ENCODE measurements at regions of chr12 and their contacts with region 1.

Region 1: DNA sequence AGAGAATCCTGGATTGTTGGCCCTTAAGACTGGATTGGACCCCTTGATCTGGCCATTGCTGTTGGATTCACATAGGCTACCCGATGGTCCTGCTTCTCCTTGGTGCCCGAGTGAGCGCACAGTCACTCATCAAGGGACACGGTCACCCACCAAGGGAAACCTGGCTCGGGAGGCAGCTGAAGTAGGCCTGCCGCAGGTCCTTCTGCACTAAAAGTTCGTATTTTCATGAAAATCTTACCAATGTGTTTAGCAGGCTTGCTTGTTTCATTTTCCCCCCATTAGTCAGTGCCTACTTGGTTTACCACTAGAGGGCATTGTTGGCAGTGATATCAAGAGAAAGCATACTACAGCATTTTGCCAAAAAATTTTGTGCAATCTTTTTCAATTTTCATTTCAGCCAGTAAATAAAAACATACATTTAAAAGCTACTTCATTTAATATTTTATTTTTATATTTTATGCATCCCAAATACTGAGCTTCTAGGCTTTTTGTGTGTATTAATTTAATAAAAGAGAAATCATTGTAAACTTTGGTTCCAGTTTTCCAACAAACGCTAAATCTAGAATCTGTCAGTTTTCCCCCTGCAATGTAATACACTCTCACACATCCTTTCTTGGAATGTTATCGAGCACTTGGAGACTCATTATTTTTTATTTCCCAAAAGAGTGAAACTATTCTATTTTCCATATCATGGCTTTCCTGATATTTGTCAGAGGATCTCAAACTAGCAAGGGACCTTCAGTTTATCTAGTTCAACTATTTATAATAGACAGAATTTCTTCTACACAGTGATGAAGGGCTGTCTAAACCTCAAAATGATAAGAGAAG is 116.7 kb downstream of the LMNTD1 start:
- DNase-seq: peak; percentile 85
- H3K4me3 Mint-ChIP-seq: peak overlapping the region; percentile 77
- H3K27ac Mint-ChIP-seq: no peak overlapping the region
- H3K4me1 Mint-ChIP-seq: peaks cover 10% of the 10 kb centered on the region
- H3K27me3 Mint-ChIP-seq: peaks cover 2% of the 10 kb centered on the region

Region 2: GRCh38 chr12:25585021-25585523 is 148.7 kb after region 1 on chr12:
- intact Hi-C with region 1: no loop called
- DNase-seq: no peak
- H3K4me3 Mint-ChIP-seq: no peak overlapping the region
- H3K27ac Mint-ChIP-seq: no peak overlapping the region
- H3K4me1 Mint-ChIP-seq: peaks cover 11% of the 10 kb centered on the region
- H3K27me3 Mint-ChIP-seq: no peaks in the 10 kb centered on the region

Region 3: DNA sequence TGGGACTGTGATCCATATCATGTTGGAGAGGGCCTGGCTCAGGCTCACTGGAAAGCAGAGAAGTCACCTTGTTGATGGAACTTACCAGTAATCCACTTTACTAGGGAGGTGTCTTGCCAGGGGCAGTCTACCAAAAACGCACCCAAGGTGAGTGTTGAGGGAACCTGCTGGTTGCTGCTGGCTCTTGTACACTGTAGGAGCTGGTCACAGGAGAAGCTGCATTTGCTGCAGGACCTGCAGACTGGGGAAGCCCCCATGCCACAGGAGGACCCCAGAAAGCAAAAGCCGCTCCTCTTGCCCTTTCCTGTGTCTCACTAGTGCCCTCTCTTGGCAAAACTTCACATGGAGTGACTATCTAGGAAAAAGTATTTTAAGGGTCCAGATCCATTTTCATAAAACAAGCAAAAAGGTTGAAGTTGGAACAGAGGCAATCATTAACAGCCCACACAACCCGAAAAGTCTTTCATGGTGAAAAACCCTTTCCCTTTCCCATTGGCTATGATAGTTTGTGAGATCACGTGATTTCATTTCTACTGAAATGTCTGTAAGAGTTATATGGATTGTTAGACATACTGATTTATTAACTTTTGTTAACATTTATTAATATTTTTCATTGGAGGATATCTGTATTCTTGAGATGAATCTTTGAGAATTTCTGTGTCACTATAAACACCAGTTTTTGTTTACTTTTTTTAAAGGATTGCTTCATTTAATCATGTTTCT is 581.2 kb after region 1 on chr12:
- intact Hi-C with region 1: loop called (anchors 1 kb)
- DNase-seq: peak; percentile 66
- H3K4me3 Mint-ChIP-seq: no peak overlapping the region
- H3K27ac Mint-ChIP-seq: no peak overlapping the region
- H3K4me1 Mint-ChIP-seq: no peaks in the 10 kb centered on the region
- H3K27me3 Mint-ChIP-seq: peaks cover 23% of the 10 kb centered on the region

Measured in activated CD4-positive, alpha-beta T cell treated with anti-CD3 and anti-CD28 coated beads, Interleukin-2, amount 10 ng/mL, durations not matched to agents 24 days and 14 days (primary cell).